H1 (cell line): ENCODE measurements at regions of chr5 and their contacts with region 1.

Region 1: GRCh38 chr5:157948738-157949410 is 89.9 kb upstream of the CLINT1 start:
- DNase-seq: peak; percentile 85 to 93
- H3K4me3 ChIP-seq: no peak overlapping the region
- H3K27ac ChIP-seq: no peak overlapping the region; the same call in 1 of the 2 replicates
- H3K4me1 ChIP-seq: peaks cover 0 to 4% (median 1%) of the 10 kb centered on the region in 4 experiments; a peak in 4 of 7 replicates
- H3K27me3 ChIP-seq: no peaks in the 10 kb centered on the region
- CTCF ChIP-seq: peak; percentile 73 to 92 (median 78)
- EP300 ChIP-seq: peak in 1 of 2 experiments; percentile 90; a peak in 1 of 3 replicates
- POLR2A ChIP-seq: peak in 1 of 2 experiments; percentile 62; a peak in 2 of 3 replicates
- RAD21 ChIP-seq: peak; percentile 70 to 75

Region 2: GRCh38 chr5:157858527-157859226 is 90.2 kb before region 1 on chr5 and contains the start of gene CLINT1:
- CTCF ChIA-PET with region 1: interaction called, 37 read pairs
- POLR2A ChIA-PET with region 1: interaction called, 3 read pairs
- DNase-seq: peak; percentile 65 to 92
- H3K4me3 ChIP-seq: peak within 1 kb of the TSS; percentile 60 to 90 (median 84)
- H3K27ac ChIP-seq: peak within 1 kb of the TSS; percentile 81
- H3K4me1 ChIP-seq: peaks cover 0 to 7% (median 4%) of the 10 kb centered on the region in 4 experiments; a peak in 3 of 7 replicates
- H3K27me3 ChIP-seq: no peaks in the 10 kb centered on the region
- CTCF ChIP-seq: no peak
- EP300 ChIP-seq: peak in 1 of 2 experiments; percentile 34; a peak in 1 of 3 replicates
- POLR2A ChIP-seq: peak; percentile 40 to 82
- RAD21 ChIP-seq: no peak; a peak in 1 of 4 replicates
- total RNA-seq, gene CLINT1: 84.7 and 85.9 TPM in 2 replicates

Region 3: GRCh38 chr5:157924931-157925729 is 23.7 kb before region 1 on chr5:
- CTCF ChIA-PET with region 1: interaction called, 72 read pairs
- POLR2A ChIA-PET with region 1: no interaction called
- DNase-seq: no peak
- H3K4me3 ChIP-seq: no peak overlapping the region
- H3K27ac ChIP-seq: no peak overlapping the region
- H3K4me1 ChIP-seq: peaks cover 5 to 18% (median 12%) of the 10 kb centered on the region in 4 experiments
- H3K27me3 ChIP-seq: no peaks in the 10 kb centered on the region
- CTCF ChIP-seq: no peak
- EP300 ChIP-seq: no peak
- POLR2A ChIP-seq: no peak
- RAD21 ChIP-seq: no peak

Region 4: GRCh38 chr5:157961828-157962590 is 13.1 kb after region 1 on chr5:
- CTCF ChIA-PET with region 1: interaction called, 79 read pairs
- POLR2A ChIA-PET with region 1: interaction called, 18 read pairs
- DNase-seq: no peak
- H3K4me3 ChIP-seq: no peak overlapping the region
- H3K27ac ChIP-seq: no peak overlapping the region
- H3K4me1 ChIP-seq: peaks cover 0 to 20% (median 7%) of the 10 kb centered on the region in 4 experiments; a peak in 6 of 7 replicates
- H3K27me3 ChIP-seq: no peaks in the 10 kb centered on the region
- CTCF ChIP-seq: no peak
- EP300 ChIP-seq: no peak
- POLR2A ChIP-seq: no peak
- RAD21 ChIP-seq: no peak

Region 5: DNA sequence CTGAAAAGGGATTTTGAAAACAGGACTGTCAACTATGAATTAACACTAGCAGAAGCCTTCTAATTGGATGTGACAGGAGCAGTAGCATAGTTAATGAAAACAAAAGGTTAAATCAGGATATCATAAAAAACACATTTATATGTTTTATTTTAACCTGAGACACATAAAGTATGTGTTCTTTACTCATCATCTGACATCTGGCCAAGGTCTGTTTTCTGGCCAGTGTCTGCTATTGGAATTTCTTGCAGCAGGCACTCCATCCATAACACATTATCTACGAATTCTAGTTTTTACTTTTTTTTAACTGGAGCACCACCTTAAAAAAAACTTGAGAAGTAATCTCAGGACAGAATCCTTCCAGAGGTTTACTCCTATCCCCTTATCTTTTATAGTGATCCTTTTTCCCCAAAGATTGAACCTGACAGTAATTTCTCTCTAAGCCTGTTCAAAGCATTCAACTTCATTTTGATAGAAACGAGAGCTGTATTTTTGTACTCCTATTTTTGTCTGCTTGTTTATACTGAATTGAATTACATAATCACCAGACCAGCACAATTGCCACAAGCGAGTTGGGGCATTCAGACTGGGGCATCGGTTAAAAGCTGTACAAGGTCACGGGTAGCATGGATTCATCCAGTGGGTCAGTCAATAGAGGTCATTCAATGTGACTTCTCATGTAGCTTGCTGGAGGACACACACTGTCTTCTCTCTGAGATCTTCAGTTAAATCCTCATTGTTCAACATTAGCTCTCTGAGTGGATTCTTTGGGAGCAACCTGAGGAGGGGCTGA is 115.7 kb after region 1 on chr5:
- CTCF ChIA-PET with region 1: no interaction called
- POLR2A ChIA-PET with region 1: no interaction called
- DNase-seq: no peak
- H3K4me3 ChIP-seq: no peak overlapping the region
- H3K27ac ChIP-seq: no peak overlapping the region
- H3K4me1 ChIP-seq: no peaks in the 10 kb centered on the region
- H3K27me3 ChIP-seq: no peaks in the 10 kb centered on the region
- CTCF ChIP-seq: no peak
- EP300 ChIP-seq: no peak
- POLR2A ChIP-seq: no peak
- RAD21 ChIP-seq: no peak